GM12878 (cell line): ENCODE measurements at regions of chr15 and their contacts with region 1.

Region 1: GRCh38 chr15:64740311-64741170 is 34.8 kb downstream of the RBPMS2 start:
- DNase-seq: no peak
- ATAC-seq: peak; percentile 80
- H3K4me3 ChIP-seq: no peak overlapping the region
- H3K27ac ChIP-seq: no peak overlapping the region
- H3K4me1 ChIP-seq: no peaks in the 10 kb centered on the region
- H3K27me3 ChIP-seq: no peaks in the 10 kb centered on the region
- CTCF ChIP-seq: peak; percentile 21 to 48 (median 25); a peak in 4 of 6 replicates
- EP300 ChIP-seq: no peak
- POLR2A ChIP-seq: no peak
- RAD21 ChIP-seq: peak; percentile 68

Region 2: DNA sequence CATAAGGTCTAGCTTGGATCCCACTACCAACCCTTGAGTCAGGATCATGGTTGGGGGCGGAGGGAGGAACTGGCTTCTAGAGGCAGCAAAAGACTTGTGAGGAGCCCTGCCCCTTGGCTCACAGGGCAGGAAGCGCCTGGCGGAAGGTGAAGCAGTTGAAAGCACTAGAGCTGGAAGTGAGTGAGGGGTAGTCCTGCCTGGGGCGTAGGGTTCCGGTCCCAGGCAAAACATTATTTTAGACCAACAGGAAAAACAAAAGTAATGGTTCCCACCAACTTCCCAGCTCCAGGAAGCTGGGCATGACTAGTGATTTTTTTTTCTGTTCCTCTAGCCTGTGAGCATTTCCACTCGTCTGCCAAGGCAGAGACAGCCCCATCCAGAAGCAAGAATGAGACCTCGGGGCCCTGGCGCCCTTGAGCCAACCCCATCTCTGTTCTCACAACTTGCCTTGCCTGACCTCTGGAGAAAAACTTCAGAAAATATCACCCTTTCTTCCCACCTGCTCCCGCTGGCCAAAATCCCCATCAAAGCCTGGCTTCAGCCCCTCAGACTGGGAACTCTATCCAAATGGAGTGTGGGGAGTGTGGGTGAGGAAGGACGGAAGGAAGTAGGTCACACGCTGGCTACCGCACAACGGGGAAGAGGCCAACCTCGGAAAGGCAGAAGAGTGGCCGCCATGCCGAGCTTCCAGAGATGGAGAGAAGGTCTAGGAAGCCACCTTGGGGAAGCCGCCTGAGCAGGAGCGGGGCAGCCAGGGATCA is 22.6 kb before region 1 on chr15:
- CTCF ChIA-PET with region 1: no interaction called
- POLR2A ChIA-PET with region 1: no interaction called
- RAD21 ChIA-PET with region 1: no interaction called
- SMC1A ChIA-PET with region 1: no interaction called
- in situ Hi-C with region 1: no loop called
- intact Hi-C with region 1: no loop called
- DNase-seq: no peak
- ATAC-seq: no peak
- H3K4me3 ChIP-seq: no peak overlapping the region
- H3K27ac ChIP-seq: no peak overlapping the region
- H3K4me1 ChIP-seq: no peaks in the 10 kb centered on the region
- H3K27me3 ChIP-seq: no peaks in the 10 kb centered on the region
- CTCF ChIP-seq: no peak
- EP300 ChIP-seq: no peak
- POLR2A ChIP-seq: no peak
- RAD21 ChIP-seq: no peak

Region 3: GRCh38 chr15:64905119-64905831 is 164.7 kb after region 1 on chr15:
- CTCF ChIA-PET with region 1: interaction called, 20 read pairs
- POLR2A ChIA-PET with region 1: interaction called, 5 read pairs
- RAD21 ChIA-PET with region 1: interaction called, 5 read pairs
- SMC1A ChIA-PET with region 1: interaction called, 4 read pairs
- in situ Hi-C with region 1: no loop called
- intact Hi-C with region 1: no loop called
- DNase-seq: no peak
- ATAC-seq: peak; percentile 98
- H3K4me3 ChIP-seq: peak overlapping the region; percentile 46; the same call in 1 of the 2 replicates
- H3K27ac ChIP-seq: 0 out of 2 replicates have a peak overlapping the region, but pooled peaks have one; percentile 20
- H3K4me1 ChIP-seq: peaks cover 13% of the 10 kb centered on the region
- H3K27me3 ChIP-seq: no peaks in the 10 kb centered on the region
- CTCF ChIP-seq: peak; percentile 87 to 91 (median 88)
- EP300 ChIP-seq: no peak
- POLR2A ChIP-seq: peak; percentile 24; the same call in 1 of the 2 replicates
- RAD21 ChIP-seq: peak; percentile 86